Transverse colon (tissue), 4 donors: ENCODE measurements at regions of chr17 and their contacts with region 1.

Region 1: DNA sequence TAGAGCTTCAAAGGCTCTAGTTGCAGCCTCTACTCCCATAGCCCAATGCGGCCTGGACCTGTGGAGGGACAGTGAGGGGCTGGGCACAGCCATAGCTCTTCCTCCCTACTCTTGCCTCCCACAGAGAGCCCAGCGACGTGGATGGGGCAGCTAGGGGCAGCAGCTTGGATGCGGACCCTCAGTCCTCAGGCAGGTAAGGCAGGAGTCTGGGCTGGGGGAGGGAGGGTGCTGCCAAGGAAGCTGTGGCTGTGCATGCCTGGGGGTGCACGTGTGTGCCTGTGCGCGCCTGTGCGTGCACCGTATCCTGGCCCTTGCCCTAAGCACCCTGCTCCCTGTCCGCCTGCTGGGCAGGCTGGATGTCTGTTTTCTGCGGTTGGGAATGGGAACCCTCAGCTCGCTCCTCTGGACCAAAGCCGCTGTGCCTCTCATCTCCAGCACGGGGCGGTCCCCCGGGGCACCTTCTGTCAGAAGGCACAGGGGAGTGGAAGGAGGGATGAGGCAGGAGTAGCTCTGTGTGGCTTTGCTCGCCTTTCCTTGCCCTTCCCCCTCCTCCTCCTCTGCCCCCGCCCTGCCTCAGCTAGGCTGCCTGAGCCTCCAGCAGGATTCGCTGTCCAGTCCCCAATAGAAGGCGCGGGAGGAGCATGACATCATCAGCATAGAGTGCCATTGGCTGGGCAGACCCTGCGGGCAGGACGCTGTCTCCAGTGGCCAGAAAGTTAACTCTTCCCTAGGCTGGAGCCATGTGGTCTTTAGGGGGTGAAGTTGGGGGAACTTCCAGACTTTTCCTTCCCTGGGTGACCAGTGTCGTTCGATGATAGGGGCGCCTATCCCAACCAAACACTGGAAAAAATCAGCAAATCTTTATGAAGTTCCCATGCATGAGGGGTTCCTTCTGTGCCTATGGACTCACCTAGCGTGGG is 797 bp downstream of the PRCD start:
- DNase-seq: peak; percentile 91
- H3K4me3 ChIP-seq: peak overlapping the region; percentile 9 to 41 (median 16)
- H3K27ac ChIP-seq: peak overlapping the region; percentile 36 to 60 (median 58)
- H3K4me1 ChIP-seq: peaks cover 5 to 39% (median 23%) of the 10 kb centered on the region in 4 donors
- H3K27me3 ChIP-seq: peaks cover 50% of the 10 kb centered on the region
- CTCF ChIP-seq: peak in 3 of 5 experiments; percentile 18 to 51 (median 40)
- EP300 ChIP-seq: no peak
- POLR2A ChIP-seq: no peak

Region 2: GRCh38 chr17:74873038-74873873 is 1667.4 kb before region 1 on chr17:
- in situ Hi-C with region 1: no loop called
- intact Hi-C with region 1: loop called (anchors 5 kb)
- DNase-seq: peak; percentile 100
- H3K4me3 ChIP-seq: peak overlapping the region; percentile 49 to 73 (median 62)
- H3K27ac ChIP-seq: peak overlapping the region; percentile 88 to 94 (median 92)
- H3K4me1 ChIP-seq: peaks cover 2 to 24% (median 19%) of the 10 kb centered on the region in 4 donors
- H3K27me3 ChIP-seq: no peaks in the 10 kb centered on the region
- CTCF ChIP-seq: no peak
- EP300 ChIP-seq: no peak
- POLR2A ChIP-seq: peak; percentile 97

Region 3: GRCh38 chr17:76714822-76715495 is 174.3 kb after region 1 on chr17:
- in situ Hi-C with region 1: loop called in 1 of 4 experiments (anchors 25 kb)
- intact Hi-C with region 1: no loop called
- DNase-seq: peak; percentile 68
- H3K4me3 ChIP-seq: no peak overlapping the region
- H3K27ac ChIP-seq: peak overlapping the region in 3 of 4 donors; percentile 18 to 58 (median 44)
- H3K4me1 ChIP-seq: peaks cover 8 to 36% (median 13%) of the 10 kb centered on the region in 4 donors
- H3K27me3 ChIP-seq: no peaks in the 10 kb centered on the region
- CTCF ChIP-seq: peak; percentile 75 to 83 (median 81)
- EP300 ChIP-seq: no peak
- POLR2A ChIP-seq: no peak